ENCODE measurements at regions of chr17 and their contacts with region 1.

Region 1: DNA sequence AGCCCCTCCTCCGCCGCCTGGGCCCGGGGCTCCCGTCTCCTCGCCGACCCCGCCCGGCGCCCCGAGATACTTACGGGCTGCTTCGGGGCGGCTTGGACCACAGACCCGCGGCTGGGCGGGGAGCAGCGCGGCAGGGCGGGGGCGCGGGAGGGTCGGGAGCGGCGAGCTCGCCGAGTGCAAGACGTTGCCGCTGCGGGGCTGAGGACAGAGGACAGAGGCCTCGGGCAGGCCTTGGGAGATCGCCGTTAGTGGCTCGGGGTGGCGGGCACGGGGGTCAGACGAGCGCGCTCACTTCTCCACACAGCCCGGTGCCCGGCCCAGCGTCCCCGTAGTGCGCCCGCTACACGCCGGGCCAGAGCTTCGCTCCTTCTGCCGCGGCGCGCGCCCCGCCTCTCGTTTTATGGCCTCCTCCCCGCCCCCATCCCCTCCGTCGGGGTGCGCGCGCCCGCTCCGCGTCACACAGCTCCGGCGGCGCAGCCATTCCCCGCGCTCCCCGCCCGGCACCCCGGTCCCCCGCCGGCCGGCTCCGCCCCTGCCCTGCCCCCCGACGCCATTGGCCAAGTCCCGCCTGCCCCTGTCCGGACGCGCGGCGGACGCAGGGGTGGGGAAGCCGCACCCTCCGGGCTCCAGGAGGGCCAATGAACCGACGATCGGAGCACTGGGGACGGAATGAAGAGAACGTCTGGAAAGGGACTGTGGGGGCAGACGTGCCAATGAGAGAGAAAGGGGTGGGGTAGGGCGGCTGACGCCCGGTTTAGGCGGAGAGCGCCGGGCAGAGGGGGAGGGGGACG is at the start of gene TOB1:
- DNase-seq: peak; percentile 99
- ATAC-seq: peak; percentile 78
- H3K4me3 Mint-ChIP-seq: peak within 1 kb of the TSS; percentile 96
- H3K27ac Mint-ChIP-seq: peak within 1 kb of the TSS; percentile 98
- H3K4me1 Mint-ChIP-seq: peaks cover 44% of the 10 kb centered on the region
- H3K27me3 Mint-ChIP-seq: no peaks in the 10 kb centered on the region
- total RNA-seq, gene TOB1: 31.3 to 43.0 TPM

Region 2: DNA sequence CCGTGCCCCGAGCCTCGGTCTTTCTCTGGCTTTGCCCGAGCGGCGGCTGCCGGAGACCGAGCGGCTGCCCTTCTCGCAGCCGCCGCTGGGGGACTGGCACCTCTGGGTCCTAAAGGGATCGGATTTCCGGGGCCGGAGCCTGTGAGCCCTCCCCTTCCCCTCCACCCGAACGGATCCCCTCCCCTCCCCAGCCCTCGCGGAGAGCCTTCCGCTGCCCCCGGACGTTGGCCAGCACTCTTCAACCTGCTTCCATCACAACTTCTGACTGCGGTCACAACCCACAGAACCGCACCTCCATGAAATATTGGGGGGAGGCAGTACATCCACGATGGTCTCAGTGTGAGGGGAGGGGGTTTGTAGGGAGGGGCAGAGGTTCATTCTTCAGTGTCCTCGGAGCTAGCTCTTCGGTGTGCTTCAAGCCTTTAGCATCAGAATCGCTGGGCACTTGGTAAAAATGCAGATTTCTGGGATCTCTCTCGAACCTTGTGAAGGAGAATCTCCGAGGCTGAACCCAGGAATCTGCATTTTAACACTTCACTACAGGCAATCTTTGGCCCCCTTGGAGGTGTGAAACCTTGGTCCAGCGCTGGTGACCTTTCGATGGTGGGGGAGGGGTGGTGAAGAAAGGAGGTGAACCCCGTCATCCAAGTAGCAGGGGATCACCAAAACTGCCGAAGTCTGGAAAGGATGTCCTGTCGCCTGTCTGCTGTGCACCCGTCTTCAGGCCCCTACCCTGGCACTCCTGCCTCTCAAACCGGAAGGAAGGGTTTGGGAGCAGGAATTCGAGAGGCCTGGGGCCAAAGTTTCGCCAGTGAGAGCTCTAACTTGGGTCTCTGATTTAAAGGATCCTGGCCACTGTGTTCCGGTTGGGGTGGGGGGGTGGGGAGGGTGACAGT is 714.9 kb before region 1 on chr17:
- CTCF ChIA-PET with region 1: no interaction called
- POLR2A ChIA-PET with region 1: no interaction called
- intact Hi-C with region 1: loop called in 1 of 2 experiments (anchors 2 kb)
- DNase-seq: peak; percentile 95
- ATAC-seq: peak; percentile 66
- H3K4me3 Mint-ChIP-seq: peak overlapping the region; percentile 90
- H3K27ac Mint-ChIP-seq: peak overlapping the region; percentile 96
- H3K4me1 Mint-ChIP-seq: peaks cover 40% of the 10 kb centered on the region
- H3K27me3 Mint-ChIP-seq: no peaks in the 10 kb centered on the region

Region 3: DNA sequence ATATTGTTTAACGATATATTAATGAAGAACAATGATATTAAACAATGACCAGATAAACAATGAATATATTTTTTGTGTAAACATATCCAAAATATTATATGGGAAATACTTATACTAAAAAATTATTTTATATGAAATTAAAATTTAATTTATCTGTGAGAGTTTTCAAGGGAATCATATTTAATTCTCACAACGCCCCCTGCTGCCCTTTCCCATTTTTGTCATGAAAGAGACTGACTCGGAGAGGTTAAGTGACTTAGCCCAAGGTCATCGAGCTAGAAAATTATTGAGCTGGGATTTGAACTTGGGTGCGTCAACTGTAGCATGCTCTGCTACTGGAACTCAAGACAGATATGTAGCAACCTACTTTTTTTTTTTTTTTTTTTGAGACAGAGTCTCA is 365.1 kb before region 1 on chr17:
- CTCF ChIA-PET with region 1: no interaction called
- POLR2A ChIA-PET with region 1: no interaction called
- intact Hi-C with region 1: no loop called
- DNase-seq: peak; percentile 61
- ATAC-seq: peak; percentile 34
- H3K4me3 Mint-ChIP-seq: no peak overlapping the region
- H3K27ac Mint-ChIP-seq: no peak overlapping the region
- H3K4me1 Mint-ChIP-seq: peaks cover 5% of the 10 kb centered on the region
- H3K27me3 Mint-ChIP-seq: peaks cover 2% of the 10 kb centered on the region

Region 4: GRCh38 chr17:50707289-50708049 is 158.7 kb before region 1 on chr17 and contains the start of gene ANKRD40:
- CTCF ChIA-PET with region 1: interaction called, 3 read pairs
- POLR2A ChIA-PET with region 1: no interaction called
- intact Hi-C with region 1: loop called (anchors 1 to 5 kb)
- DNase-seq: peak; percentile 94
- ATAC-seq: peak; percentile 76
- H3K4me3 Mint-ChIP-seq: peak within 1 kb of the TSS; percentile 91
- H3K27ac Mint-ChIP-seq: peak within 1 kb of the TSS; percentile 99
- H3K4me1 Mint-ChIP-seq: peaks cover 46% of the 10 kb centered on the region
- H3K27me3 Mint-ChIP-seq: no peaks in the 10 kb centered on the region
- total RNA-seq, gene ANKRD40: 28.0 to 29.8 TPM

Region 5: GRCh38 chr17:50904521-50905459 is 38.6 kb after region 1 on chr17:
- CTCF ChIA-PET with region 1: no interaction called
- POLR2A ChIA-PET with region 1: interaction called, 14 read pairs
- intact Hi-C with region 1: no loop called
- DNase-seq: no peak
- ATAC-seq: no peak
- H3K4me3 Mint-ChIP-seq: no peak overlapping the region
- H3K27ac Mint-ChIP-seq: no peak overlapping the region
- H3K4me1 Mint-ChIP-seq: peaks cover 59% of the 10 kb centered on the region
- H3K27me3 Mint-ChIP-seq: no peaks in the 10 kb centered on the region

Region 6: GRCh38 chr17:50931144-50931908 is 65.1 kb after region 1 on chr17:
- CTCF ChIA-PET with region 1: interaction called, 5 read pairs
- POLR2A ChIA-PET with region 1: interaction called, 9 read pairs
- intact Hi-C with region 1: loop called in 1 of 2 experiments (anchors 1 kb)
- DNase-seq: peak; percentile 66
- ATAC-seq: peak; percentile 80
- H3K4me3 Mint-ChIP-seq: peak overlapping the region; percentile 73
- H3K27ac Mint-ChIP-seq: peak overlapping the region; percentile 86
- H3K4me1 Mint-ChIP-seq: peaks cover 17% of the 10 kb centered on the region
- H3K27me3 Mint-ChIP-seq: no peaks in the 10 kb centered on the region

Region 7: GRCh38 chr17:50956750-50957523 is 90.8 kb after region 1 on chr17:
- CTCF ChIA-PET with region 1: interaction called, 8 read pairs
- POLR2A ChIA-PET with region 1: interaction called, 12 read pairs
- intact Hi-C with region 1: loop called in 1 of 2 experiments (anchors 1 kb)
- DNase-seq: peak; percentile 80
- ATAC-seq: peak; percentile 98
- H3K4me3 Mint-ChIP-seq: no peak overlapping the region
- H3K27ac Mint-ChIP-seq: no peak overlapping the region
- H3K4me1 Mint-ChIP-seq: peaks cover 2% of the 10 kb centered on the region
- H3K27me3 Mint-ChIP-seq: no peaks in the 10 kb centered on the region

Region 8: DNA sequence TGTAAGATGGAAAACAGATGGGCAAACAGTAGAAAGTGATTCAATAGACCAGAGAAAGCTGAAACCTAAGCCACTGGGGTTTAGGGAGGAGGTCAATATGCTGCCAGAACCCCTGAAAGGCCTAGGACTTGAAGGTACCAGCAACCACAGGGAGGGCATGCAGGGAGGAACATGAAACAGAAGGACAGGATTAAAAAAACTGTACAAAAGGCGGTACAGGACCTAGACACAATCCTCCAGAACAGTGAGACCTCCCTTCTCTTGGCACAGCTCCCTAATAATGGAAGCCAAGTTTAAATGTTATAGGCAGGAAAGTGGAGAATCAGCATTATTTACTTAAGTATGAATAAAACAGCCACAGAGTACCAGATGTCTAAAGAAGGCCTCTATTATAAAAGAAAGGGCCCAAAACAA is 149.0 kb after region 1 on chr17:
- CTCF ChIA-PET with region 1: no interaction called
- POLR2A ChIA-PET with region 1: no interaction called
- intact Hi-C with region 1: no loop called
- DNase-seq: no peak
- ATAC-seq: no peak
- H3K4me3 Mint-ChIP-seq: no peak overlapping the region
- H3K27ac Mint-ChIP-seq: no peak overlapping the region
- H3K4me1 Mint-ChIP-seq: no peaks in the 10 kb centered on the region
- H3K27me3 Mint-ChIP-seq: no peaks in the 10 kb centered on the region

Region 9: DNA sequence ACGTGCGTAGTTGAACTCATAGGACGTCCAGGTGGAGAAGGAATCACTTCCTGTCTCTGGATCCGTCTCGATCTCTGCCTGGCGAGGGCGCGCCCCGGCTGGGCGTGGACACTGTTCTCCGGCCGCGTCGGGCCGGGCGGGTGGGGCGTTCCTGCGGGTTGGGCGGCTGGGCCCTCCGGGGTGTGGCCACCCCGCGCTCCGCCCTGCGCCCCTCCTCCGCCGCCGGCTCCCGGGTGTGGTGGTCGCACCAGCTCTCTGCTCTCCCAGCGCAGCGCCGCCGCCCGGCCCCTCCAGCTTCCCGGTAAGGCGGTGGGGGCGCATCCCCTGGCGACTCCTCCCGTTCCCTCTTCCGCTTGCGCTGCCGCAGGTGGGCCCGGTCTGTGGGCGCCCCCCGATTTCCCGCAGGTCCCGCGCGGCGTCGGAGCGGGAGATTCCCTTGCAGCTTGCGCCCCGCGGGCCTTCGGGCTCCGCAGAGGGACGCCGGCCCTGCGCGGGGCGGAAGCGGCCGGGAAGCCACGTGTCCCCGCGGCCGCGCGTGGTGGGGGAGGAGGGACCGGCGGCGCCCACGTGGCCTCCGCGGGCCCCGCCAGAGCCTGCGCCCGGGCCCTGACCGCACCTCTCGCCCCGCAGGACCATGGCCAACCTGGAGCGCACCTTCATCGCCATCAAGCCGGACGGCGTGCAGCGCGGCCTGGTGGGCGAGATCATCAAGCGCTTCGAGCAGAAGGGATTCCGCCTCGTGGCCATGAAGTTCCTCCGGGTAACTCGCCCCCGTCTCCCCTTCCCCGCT is 300.2 kb after region 1 on chr17 and contains the start of gene NME2:
- CTCF ChIA-PET with region 1: no interaction called
- POLR2A ChIA-PET with region 1: no interaction called
- intact Hi-C with region 1: loop called in 1 of 2 experiments (anchors 1 kb)
- DNase-seq: peak; percentile 80
- ATAC-seq: peak; percentile 76
- H3K4me3 Mint-ChIP-seq: peak within 1 kb of the TSS; percentile 79
- H3K27ac Mint-ChIP-seq: peak within 1 kb of the TSS; percentile 95
- H3K4me1 Mint-ChIP-seq: peaks cover 31% of the 10 kb centered on the region
- H3K27me3 Mint-ChIP-seq: no peaks in the 10 kb centered on the region
- total RNA-seq, gene NME2: 703 to 827 TPM

Region 10: DNA sequence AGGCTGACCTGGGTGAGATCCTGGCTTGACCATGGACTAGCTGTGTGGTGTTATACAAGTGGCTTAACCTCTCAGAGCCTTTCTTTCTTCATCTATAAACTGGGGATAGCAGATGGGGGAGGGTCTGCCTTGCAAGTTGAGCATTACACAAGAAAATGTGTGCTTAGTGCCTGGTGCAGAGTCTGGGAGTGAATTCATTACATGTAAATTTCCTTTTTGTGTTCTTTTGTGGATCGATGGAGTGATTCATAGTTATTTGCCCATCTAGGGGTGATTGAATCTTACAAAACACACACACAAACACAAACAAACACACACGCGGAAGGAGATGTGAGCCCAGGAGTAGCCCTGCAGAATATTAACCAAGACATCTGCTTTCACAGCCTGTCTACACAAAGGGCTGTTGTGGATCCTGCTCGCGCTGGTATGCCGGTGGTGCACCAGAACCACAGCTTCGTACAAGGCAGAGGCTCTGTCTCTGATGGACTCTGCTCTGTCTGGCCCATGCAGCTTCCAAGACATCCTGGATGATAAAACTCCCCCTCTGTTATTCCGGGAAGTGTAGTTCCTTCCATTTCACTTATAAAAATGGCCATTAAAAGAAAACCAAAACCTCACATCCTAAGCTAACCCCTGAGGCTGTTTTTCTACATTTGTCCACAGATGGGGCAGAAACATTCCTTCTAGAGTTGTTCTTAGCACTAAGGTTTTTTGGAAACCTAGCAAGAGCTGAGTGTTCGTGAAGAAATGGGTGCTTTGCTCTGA is 480.2 kb after region 1 on chr17:
- CTCF ChIA-PET with region 1: no interaction called
- POLR2A ChIA-PET with region 1: no interaction called
- intact Hi-C with region 1: no loop called
- DNase-seq: no peak
- ATAC-seq: no peak
- H3K4me3 Mint-ChIP-seq: no peak overlapping the region
- H3K27ac Mint-ChIP-seq: no peak overlapping the region
- H3K4me1 Mint-ChIP-seq: no peaks in the 10 kb centered on the region
- H3K27me3 Mint-ChIP-seq: no peaks in the 10 kb centered on the region

Measured in activated CD4-positive, alpha-beta T cell treated with anti-CD3 and anti-CD28 coated beads for 36 hours (primary cell).